GM12878 (cell line): ENCODE measurements at regions of chr10 and their contacts with region 1.

Region 1: GRCh38 chr10:128011175-128011979 is 104.5 kb downstream of the PTPRE start:
- DNase-seq: peak; percentile 19
- ATAC-seq: peak; percentile 93
- H3K4me3 ChIP-seq: no peak overlapping the region
- H3K27ac ChIP-seq: no peak overlapping the region
- H3K4me1 ChIP-seq: no peaks in the 10 kb centered on the region
- H3K27me3 ChIP-seq: 0 out of 4 replicates have a peak, but pooled peaks cover 0 to 2% of the 10 kb centered on the region in 2 experiments
- CTCF ChIP-seq: peak; percentile 97 to 99 (median 98); a peak in 5 of 6 replicates
- EP300 ChIP-seq: no peak
- POLR2A ChIP-seq: no peak
- RAD21 ChIP-seq: peak; percentile 73

Region 2: GRCh38 chr10:127715782-127716378 is 295.5 kb before region 1 on chr10:
- CTCF ChIA-PET with region 1: interaction called, 16 read pairs
- POLR2A ChIA-PET with region 1: no interaction called
- RAD21 ChIA-PET with region 1: interaction called, 3 read pairs
- SMC1A ChIA-PET with region 1: interaction called, 5 read pairs
- in situ Hi-C with region 1: loop called (anchors 10 kb)
- intact Hi-C with region 1: loop called (anchors 1 kb)
- DNase-seq: no peak
- ATAC-seq: no peak
- H3K4me3 ChIP-seq: no peak overlapping the region
- H3K27ac ChIP-seq: no peak overlapping the region
- H3K4me1 ChIP-seq: no peaks in the 10 kb centered on the region
- H3K27me3 ChIP-seq: no peaks in the 10 kb centered on the region
- CTCF ChIP-seq: peak; percentile 16 to 49 (median 34); a peak in 4 of 6 replicates
- EP300 ChIP-seq: no peak
- POLR2A ChIP-seq: no peak
- RAD21 ChIP-seq: peak; percentile 51

Region 3: DNA sequence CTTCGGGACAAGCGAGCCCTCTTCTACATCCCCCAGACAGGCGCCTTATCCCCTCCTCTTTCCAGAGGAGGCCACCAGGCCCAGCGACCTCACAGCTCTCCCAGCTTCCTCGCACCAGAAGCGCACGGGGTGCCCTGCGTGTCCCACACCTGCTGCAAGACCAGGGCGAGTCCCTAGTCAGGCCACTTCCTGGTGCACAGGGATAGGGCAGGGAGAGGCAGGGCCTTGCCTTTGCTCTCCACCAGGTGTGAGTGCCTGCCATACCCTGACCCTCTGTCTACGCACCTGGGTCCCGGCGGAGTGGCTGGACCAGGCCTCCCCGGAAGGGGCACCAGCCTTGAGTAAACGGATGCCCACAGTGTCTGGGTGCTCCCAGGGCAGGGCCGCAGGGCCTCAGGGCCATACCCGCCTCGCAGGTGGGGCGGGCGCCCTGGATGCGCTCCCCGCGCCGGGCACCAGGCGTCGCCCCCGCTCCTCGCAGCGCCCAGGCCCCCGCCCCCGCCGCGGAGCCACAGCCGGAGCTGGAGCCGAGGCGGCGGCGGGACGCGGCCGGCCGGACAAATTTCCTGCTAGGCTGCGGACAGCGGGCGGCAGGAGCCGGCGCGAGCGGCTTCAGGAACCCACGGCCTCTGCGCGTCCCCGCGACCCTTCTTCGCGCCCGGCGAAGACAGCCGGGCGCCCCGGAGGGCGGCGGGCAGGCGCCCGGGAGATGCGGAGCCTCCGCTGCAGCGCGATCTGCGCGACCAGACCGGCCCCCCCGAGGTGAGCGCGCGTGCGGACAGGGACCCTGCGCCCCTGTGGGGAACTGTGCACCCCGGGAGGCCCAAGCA is 104.6 kb before region 1 on chr10 and contains the start of gene PTPRE:
- CTCF ChIA-PET with region 1: interaction called, 7 read pairs
- POLR2A ChIA-PET with region 1: no interaction called
- RAD21 ChIA-PET with region 1: interaction called, 3 read pairs
- SMC1A ChIA-PET with region 1: no interaction called
- in situ Hi-C with region 1: no loop called
- intact Hi-C with region 1: loop called (anchors 1 kb)
- DNase-seq: no peak
- ATAC-seq: peak; percentile 97
- H3K4me3 ChIP-seq: no peak within 1 kb of the TSS
- H3K27ac ChIP-seq: no peak within 1 kb of the TSS
- H3K4me1 ChIP-seq: no peaks in the 10 kb centered on the region
- H3K27me3 ChIP-seq: no peaks in the 10 kb centered on the region; a peak in 2 of 4 replicates
- CTCF ChIP-seq: peak; percentile 35 to 45 (median 39); a peak in 4 of 6 replicates
- EP300 ChIP-seq: no peak
- POLR2A ChIP-seq: no peak
- RAD21 ChIP-seq: peak; percentile 24; the same call in 1 of the 2 replicates
- polyA plus RNA-seq, gene PTPRE: 5.8 to 6.7 TPM

Region 4: GRCh38 chr10:127961071-127961470 is 50.3 kb before region 1 on chr10:
- CTCF ChIA-PET with region 1: no interaction called
- POLR2A ChIA-PET with region 1: no interaction called
- RAD21 ChIA-PET with region 1: no interaction called
- SMC1A ChIA-PET with region 1: no interaction called
- in situ Hi-C with region 1: no loop called
- intact Hi-C with region 1: no loop called
- DNase-seq: no peak
- ATAC-seq: no peak
- H3K4me3 ChIP-seq: no peak overlapping the region
- H3K27ac ChIP-seq: no peak overlapping the region
- H3K4me1 ChIP-seq: no peaks in the 10 kb centered on the region
- H3K27me3 ChIP-seq: no peaks in the 10 kb centered on the region
- CTCF ChIP-seq: no peak
- EP300 ChIP-seq: no peak
- POLR2A ChIP-seq: no peak
- RAD21 ChIP-seq: no peak